H1 (cell line): ENCODE measurements at regions of chr1 and their contacts with region 1.

Region 1: DNA sequence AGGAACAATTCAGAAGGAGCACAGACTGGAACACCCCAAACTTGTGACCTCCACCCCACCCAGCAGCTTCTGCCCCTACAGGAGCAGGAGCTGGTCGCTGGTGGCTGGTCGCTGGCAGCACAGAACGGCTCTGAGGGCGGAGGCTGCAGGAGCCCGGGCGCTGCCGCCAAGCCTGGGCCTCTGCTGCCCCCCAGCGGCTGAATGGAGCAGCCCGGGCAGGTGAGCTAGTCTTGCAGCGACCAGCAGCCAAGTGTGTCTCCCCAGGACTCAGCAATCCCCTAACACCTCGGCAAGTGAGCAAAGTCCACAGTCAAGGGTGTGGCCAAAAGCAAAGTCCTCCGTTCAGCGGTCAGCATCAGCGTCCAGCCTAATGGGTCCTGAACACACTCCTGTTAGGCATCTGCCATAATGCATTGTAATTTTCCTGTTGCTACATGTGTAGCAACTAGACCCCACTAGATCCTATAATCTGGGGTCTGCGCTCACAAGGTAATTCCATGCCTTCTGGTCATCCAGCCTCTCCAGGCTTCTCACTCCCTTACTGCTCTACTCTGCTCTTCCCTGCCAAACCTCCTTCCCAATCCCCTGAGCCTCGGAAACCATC is 12.1 kb upstream of the GJB5 start:
- DNase-seq: peak in 1 of 2 experiments; percentile 98
- H3K4me3 ChIP-seq: no peak overlapping the region
- H3K27ac ChIP-seq: no peak overlapping the region
- H3K4me1 ChIP-seq: peaks cover 0 to 5% (median 1%) of the 10 kb centered on the region in 4 experiments; a peak in 5 of 7 replicates
- H3K27me3 ChIP-seq: peaks cover 0 to 13% (median 5%) of the 10 kb centered on the region in 4 experiments; a peak in 5 of 7 replicates
- CTCF ChIP-seq: peak; percentile 90 to 98 (median 98)
- EP300 ChIP-seq: no peak
- POLR2A ChIP-seq: no peak
- RAD21 ChIP-seq: peak; percentile 98 to 99

Region 2: GRCh38 chr1:34113887-34114286 is 628.9 kb before region 1 on chr1:
- CTCF ChIA-PET with region 1: interaction called, 10 read pairs
- POLR2A ChIA-PET with region 1: no interaction called
- DNase-seq: peak in 1 of 2 experiments; percentile 48
- H3K4me3 ChIP-seq: no peak overlapping the region
- H3K27ac ChIP-seq: no peak overlapping the region
- H3K4me1 ChIP-seq: 0 out of 7 replicates have a peak, but pooled peaks cover 0 to 3% (median 0%) of the 10 kb centered on the region in 4 experiments
- H3K27me3 ChIP-seq: no peaks in the 10 kb centered on the region
- CTCF ChIP-seq: peak in 2 of 3 experiments; percentile 59 to 60; a peak in 3 of 4 replicates
- EP300 ChIP-seq: no peak
- POLR2A ChIP-seq: no peak
- RAD21 ChIP-seq: peak; percentile 51 to 61

Region 3: GRCh38 chr1:34549199-34549598 is 193.6 kb before region 1 on chr1:
- CTCF ChIA-PET with region 1: interaction called, 11 read pairs
- POLR2A ChIA-PET with region 1: no interaction called
- DNase-seq: peak; percentile 13 to 65
- H3K4me3 ChIP-seq: no peak overlapping the region
- H3K27ac ChIP-seq: no peak overlapping the region
- H3K4me1 ChIP-seq: peaks cover 0 to 3% (median 0%) of the 10 kb centered on the region in 4 experiments; a peak in 2 of 7 replicates
- H3K27me3 ChIP-seq: no peaks in the 10 kb centered on the region
- CTCF ChIP-seq: peak; percentile 55 to 66 (median 58)
- EP300 ChIP-seq: no peak
- POLR2A ChIP-seq: no peak
- RAD21 ChIP-seq: peak; percentile 41 to 59

Region 4: GRCh38 chr1:34681480-34682451 is 61.0 kb before region 1 on chr1:
- CTCF ChIA-PET with region 1: interaction called, 26 read pairs
- POLR2A ChIA-PET with region 1: no interaction called
- DNase-seq: peak; percentile 38 to 93
- H3K4me3 ChIP-seq: no peak overlapping the region
- H3K27ac ChIP-seq: no peak overlapping the region
- H3K4me1 ChIP-seq: peaks cover 0 to 9% (median 2%) of the 10 kb centered on the region in 4 experiments; a peak in 4 of 7 replicates
- H3K27me3 ChIP-seq: no peaks in the 10 kb centered on the region
- CTCF ChIP-seq: peak; percentile 54 to 92 (median 80)
- EP300 ChIP-seq: no peak
- POLR2A ChIP-seq: no peak
- RAD21 ChIP-seq: peak; percentile 82 to 88

Region 5: DNA sequence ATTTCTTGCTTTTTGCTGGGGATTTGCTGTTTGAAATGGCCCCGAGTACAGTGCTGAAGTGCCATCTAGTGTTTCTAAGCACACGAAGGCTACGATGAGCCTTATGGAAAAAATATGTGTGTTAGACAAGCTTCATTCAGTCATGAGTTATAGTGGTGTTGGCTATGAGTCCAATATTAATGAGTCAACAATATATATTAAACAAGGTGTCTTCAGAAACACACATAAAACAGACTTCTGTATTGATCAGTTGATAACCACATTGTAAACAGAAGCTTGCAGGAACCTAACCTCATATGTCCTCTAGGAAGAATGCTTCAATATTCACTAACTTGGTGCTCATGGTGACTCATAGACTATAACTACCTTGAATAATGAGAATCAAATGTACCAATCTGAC is 10.4 kb after region 1 on chr1:
- CTCF ChIA-PET with region 1: interaction called, 42 read pairs
- POLR2A ChIA-PET with region 1: interaction called, 4 read pairs
- DNase-seq: no peak
- H3K4me3 ChIP-seq: no peak overlapping the region
- H3K27ac ChIP-seq: no peak overlapping the region
- H3K4me1 ChIP-seq: peaks cover 0 to 6% (median 4%) of the 10 kb centered on the region in 4 experiments; a peak in 4 of 7 replicates
- H3K27me3 ChIP-seq: no peaks in the 10 kb centered on the region
- CTCF ChIP-seq: no peak
- EP300 ChIP-seq: no peak
- POLR2A ChIP-seq: no peak
- RAD21 ChIP-seq: peak; percentile 28 to 50

Region 6: DNA sequence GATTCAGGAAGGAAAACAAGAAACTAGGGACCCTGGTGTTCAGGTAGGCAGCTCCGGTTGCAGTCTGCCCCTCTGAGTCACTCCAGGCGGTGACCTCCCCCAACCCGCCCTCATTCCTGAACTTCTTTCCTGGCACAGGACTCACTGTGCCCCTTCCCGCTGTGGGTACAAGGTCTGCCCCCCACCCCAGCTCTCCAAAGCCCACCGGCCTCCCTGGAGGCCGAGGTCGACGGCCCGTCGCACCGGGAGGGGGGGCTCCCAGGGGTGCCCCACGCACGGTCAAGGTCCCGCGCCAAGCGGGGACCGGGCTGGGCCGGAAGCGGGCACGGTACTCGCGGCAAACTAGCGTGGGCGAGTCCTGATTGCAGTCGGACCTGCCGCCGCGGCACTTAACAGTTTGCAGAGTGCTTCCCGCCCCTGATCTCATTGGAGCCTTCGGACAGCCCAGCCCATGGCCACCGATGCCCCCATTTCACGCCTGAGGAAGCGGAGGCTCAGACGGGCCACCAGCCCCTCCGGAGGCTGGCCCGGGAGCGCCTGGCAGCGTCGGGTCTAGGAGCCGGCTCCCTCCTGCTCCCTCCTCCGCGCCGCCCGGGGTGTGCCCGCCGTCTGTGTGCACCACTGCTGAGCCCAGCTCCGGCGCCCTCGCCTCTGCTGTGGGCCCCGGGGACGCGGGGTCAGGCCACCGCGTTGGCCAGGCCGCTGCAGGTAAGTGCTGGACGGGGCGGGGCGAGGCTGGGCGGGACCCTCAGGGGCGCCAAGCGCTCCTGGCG is 38.5 kb after region 1 on chr1 and contains the start of gene GJB3:
- CTCF ChIA-PET with region 1: interaction called, 17 read pairs
- POLR2A ChIA-PET with region 1: no interaction called
- DNase-seq: peak in 1 of 2 experiments; percentile 76
- H3K4me3 ChIP-seq: peak within 1 kb of the TSS; percentile 51 to 83 (median 80)
- H3K27ac ChIP-seq: no peak within 1 kb of the TSS
- H3K4me1 ChIP-seq: peaks cover 0 to 14% (median 5%) of the 10 kb centered on the region in 4 experiments; a peak in 4 of 7 replicates
- H3K27me3 ChIP-seq: peaks cover 0 to 24% (median 10%) of the 10 kb centered on the region in 4 experiments; a peak in 5 of 7 replicates
- CTCF ChIP-seq: no peak
- EP300 ChIP-seq: no peak
- POLR2A ChIP-seq: no peak
- RAD21 ChIP-seq: no peak
- total RNA-seq, gene GJB3: 0.93 and 1.1 TPM in 2 replicates

Region 7: DNA sequence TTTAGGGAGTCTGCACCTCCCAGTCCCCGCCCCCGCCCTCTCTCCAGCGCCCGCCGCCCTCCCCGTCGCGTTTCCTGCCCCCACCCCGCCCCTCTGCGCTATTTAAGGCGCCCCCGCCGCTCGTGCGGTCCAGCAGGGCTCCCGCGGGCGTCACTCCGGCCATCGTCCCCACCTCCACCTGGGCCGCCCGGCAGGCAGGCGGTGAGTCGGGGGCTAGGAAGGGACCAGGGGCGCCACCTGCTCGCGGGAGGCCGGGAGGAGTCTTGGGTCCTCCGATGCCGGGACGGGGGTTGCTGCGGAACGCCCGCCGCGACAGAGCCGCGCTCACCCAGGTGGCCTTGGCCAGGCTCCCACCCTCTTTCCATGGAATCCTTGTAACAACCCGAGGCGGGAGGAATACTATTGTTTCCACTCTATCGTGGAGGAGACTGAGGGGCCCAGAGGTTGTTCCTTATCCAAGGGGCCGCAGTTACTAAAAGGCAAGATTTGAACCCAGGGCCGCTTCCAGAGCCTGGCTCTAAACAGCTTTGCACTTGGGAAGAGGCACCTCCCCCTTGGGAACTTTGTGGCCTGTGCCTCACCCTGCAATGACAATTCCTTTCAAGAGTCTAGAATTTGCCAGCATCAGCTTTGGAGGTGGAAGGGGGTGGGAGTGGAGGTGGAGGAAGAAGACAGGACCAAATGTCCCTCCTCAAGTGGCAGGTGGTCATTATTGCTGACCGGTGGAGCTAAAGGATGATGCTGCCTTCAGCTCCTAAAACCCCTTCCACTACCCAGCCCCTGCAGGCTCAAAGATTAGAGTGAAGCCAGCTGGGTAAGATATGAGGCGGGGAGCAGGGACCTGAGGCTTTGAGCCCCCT is 50.3 kb after region 1 on chr1 and contains the start of gene GJA4:
- CTCF ChIA-PET with region 1: no interaction called
- POLR2A ChIA-PET with region 1: no interaction called
- DNase-seq: no peak
- H3K4me3 ChIP-seq: peak within 1 kb of the TSS; percentile 31 to 63 (median 44); a peak in 7 of 8 replicates
- H3K27ac ChIP-seq: no peak within 1 kb of the TSS
- H3K4me1 ChIP-seq: peaks cover 0 to 12% (median 7%) of the 10 kb centered on the region in 4 experiments; a peak in 4 of 7 replicates
- H3K27me3 ChIP-seq: peaks cover 0 to 13% (median 10%) of the 10 kb centered on the region in 4 experiments; a peak in 4 of 7 replicates
- CTCF ChIP-seq: no peak
- EP300 ChIP-seq: no peak
- POLR2A ChIP-seq: no peak
- RAD21 ChIP-seq: no peak
- total RNA-seq, gene GJA4: 2.7 and 3.2 TPM in 2 replicates

Region 8: GRCh38 chr1:34816778-34817177 is 74.0 kb after region 1 on chr1:
- CTCF ChIA-PET with region 1: no interaction called
- POLR2A ChIA-PET with region 1: no interaction called
- DNase-seq: no peak
- H3K4me3 ChIP-seq: no peak overlapping the region
- H3K27ac ChIP-seq: no peak overlapping the region
- H3K4me1 ChIP-seq: no peaks in the 10 kb centered on the region
- H3K27me3 ChIP-seq: no peaks in the 10 kb centered on the region
- CTCF ChIP-seq: no peak
- EP300 ChIP-seq: no peak
- POLR2A ChIP-seq: no peak
- RAD21 ChIP-seq: no peak